Mammary epithelial cell (primary cell): ENCODE measurements at regions of chrX and their contacts with region 1.

Region 1: DNA sequence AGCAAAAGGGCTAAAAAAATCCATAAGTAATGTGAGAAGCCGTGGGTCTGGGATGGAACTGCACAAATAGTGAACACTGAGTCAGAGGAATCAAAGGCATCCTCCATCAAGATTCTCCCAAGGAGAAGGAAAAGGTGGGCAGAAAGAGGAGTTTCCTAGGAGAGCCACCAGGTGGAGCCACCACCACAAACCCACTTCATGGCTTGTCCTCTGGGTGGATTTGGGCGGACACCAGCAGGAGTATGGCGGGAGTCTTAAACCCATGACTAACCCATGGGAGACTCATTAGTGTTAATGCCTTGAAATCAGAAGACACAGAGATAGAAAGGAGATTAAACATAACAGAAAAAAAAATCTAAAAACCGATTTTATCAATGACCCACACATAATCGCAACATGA is 147.7 kb downstream of the SH3KBP1 start:
- DNase-seq: peak; percentile 61
- H3K4me3 ChIP-seq: no peak overlapping the region
- H3K27ac ChIP-seq: no peak overlapping the region
- H3K4me1 ChIP-seq: no peaks in the 10 kb centered on the region
- H3K27me3 ChIP-seq: no peaks in the 10 kb centered on the region
- CTCF ChIP-seq: peak; percentile 42 to 68

Region 2: DNA sequence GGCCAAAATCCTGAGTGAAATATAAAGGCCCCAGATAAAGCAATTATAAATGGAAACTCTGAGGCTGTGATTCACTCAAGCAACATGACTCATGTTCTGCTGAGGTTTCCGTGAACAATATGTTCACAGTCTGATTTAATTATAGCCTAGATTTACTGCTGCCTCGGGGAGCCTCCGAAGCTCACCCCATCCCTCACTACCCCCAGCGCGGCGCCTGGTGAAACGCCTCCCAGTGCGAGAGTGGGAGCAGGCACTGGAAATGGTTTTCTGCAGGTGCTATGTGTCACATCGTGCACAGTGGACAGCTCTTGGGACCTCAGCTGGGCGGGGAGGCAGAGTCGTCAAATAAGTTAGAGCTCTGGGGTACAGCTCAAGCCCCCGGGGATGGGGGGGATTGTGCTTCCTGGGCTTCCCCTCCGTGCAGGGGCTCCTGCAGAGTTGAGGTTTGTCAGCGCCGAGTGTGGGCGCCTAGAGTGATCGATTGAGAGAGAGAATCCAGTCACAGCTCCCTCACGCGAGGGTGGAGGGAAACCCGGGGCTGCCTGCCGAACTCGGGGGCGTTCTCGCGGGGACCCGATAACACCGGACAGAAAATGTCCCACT is 866.4 kb before region 1 on chrX:
- CTCF ChIA-PET with region 1: no interaction called
- dilution Hi-C with region 1: no loop called
- in situ Hi-C with region 1: no loop called
- intact Hi-C with region 1: no loop called
- DNase-seq: peak; percentile 81
- H3K4me3 ChIP-seq: no peak overlapping the region
- H3K27ac ChIP-seq: peak overlapping the region; percentile 48
- H3K4me1 ChIP-seq: peaks cover 10% of the 10 kb centered on the region
- H3K27me3 ChIP-seq: no peaks in the 10 kb centered on the region
- CTCF ChIP-seq: no peak

Region 3: GRCh38 chrX:19593690-19594089 is 146.0 kb before region 1 on chrX:
- CTCF ChIA-PET with region 1: no interaction called
- dilution Hi-C with region 1: no loop called
- in situ Hi-C with region 1: no loop called
- intact Hi-C with region 1: loop called (anchors 1 kb)
- DNase-seq: no peak
- H3K4me3 ChIP-seq: no peak overlapping the region
- H3K27ac ChIP-seq: no peak overlapping the region
- H3K4me1 ChIP-seq: peaks cover 3% of the 10 kb centered on the region
- H3K27me3 ChIP-seq: no peaks in the 10 kb centered on the region
- CTCF ChIP-seq: peak; percentile 45 to 55

Region 4: GRCh38 chrX:19709812-19710518 is 29.7 kb before region 1 on chrX:
- CTCF ChIA-PET with region 1: no interaction called
- dilution Hi-C with region 1: no loop called
- in situ Hi-C with region 1: no loop called
- intact Hi-C with region 1: loop called (anchors 1 kb)
- DNase-seq: peak; percentile 95
- H3K4me3 ChIP-seq: no peak overlapping the region
- H3K27ac ChIP-seq: peak overlapping the region; percentile 90
- H3K4me1 ChIP-seq: peaks cover 17% of the 10 kb centered on the region
- H3K27me3 ChIP-seq: no peaks in the 10 kb centered on the region
- CTCF ChIP-seq: no peak

Region 5: GRCh38 chrX:20530406-20530921 is 790.8 kb after region 1 on chrX:
- CTCF ChIA-PET with region 1: no interaction called
- dilution Hi-C with region 1: no loop called
- in situ Hi-C with region 1: no loop called
- intact Hi-C with region 1: no loop called
- DNase-seq: peak; percentile 32
- H3K4me3 ChIP-seq: peak overlapping the region in 1 of 3 experiments; percentile 17
- H3K27ac ChIP-seq: no peak overlapping the region
- H3K4me1 ChIP-seq: no peaks in the 10 kb centered on the region
- H3K27me3 ChIP-seq: no peaks in the 10 kb centered on the region
- CTCF ChIP-seq: peak; percentile 76 to 79